ENCODE measurements at regions of chr5 and their contacts with region 1.

Region 1: GRCh38 chr5:115641948-115642347 is 16.1 kb upstream of the TMED7 start:
- DNase-seq: no peak
- ATAC-seq: no peak
- H3K4me3 ChIP-seq: no peak overlapping the region
- H3K27ac ChIP-seq: no peak overlapping the region
- H3K4me1 ChIP-seq: no peaks in the 10 kb centered on the region
- H3K27me3 ChIP-seq: no peaks in the 10 kb centered on the region
- CTCF ChIP-seq: no peak

Region 2: DNA sequence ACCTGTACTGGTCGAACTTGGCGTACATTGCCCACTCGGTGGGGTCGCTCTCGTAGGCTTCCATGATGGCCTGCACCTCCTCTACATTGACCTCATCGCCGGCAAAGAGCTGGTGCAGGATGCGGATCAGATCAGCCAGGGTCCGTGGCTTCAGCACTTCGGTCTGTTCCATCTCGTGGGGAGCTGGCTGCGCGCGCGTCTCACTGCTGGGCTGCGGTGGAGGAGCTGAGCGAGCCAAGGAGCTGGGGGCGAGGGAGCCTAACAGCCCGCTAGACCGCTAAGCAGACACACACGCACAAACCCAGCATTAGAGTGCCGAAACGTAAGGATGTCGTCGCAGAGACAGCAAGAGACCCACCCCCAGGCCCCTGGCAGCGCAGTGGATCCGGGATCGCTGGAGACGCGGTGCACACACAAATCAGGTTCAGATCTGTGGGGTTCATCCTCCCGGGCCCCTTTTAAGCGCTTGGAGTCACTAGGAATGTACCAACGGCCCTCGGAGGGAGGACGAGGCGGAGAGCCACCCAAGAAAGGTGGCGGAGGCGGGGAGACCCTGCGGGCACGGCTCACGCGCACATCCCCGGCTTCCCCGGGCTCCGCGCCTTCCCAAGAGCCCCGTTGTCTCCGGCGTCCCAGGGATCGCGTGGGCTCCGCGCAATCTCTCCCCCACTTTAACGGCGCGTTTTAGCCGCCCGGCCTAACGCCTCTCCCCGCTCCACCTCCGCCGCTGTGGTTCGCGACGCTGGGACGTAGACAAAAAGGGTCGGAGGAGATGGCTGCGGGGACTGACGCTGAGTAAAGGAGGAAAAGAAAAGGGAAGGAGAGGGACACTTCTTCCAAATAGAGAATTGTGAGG is 174.5 kb after region 1 on chr5 and contains the start of gene CDO1:
- intact Hi-C with region 1: loop called in 2 of 3 experiments (anchors 10 kb)
- DNase-seq: peak; percentile 18 to 70 (median 36)
- ATAC-seq: peak; percentile 76 to 85 (median 83)
- H3K4me3 ChIP-seq: peak within 1 kb of the TSS; percentile 29 to 53 (median 37)
- H3K27ac ChIP-seq: peak within 1 kb of the TSS; percentile 65 to 87 (median 72)
- H3K4me1 ChIP-seq: no peaks in the 10 kb centered on the region
- H3K27me3 ChIP-seq: no peaks in the 10 kb centered on the region
- CTCF ChIP-seq: no peak
- total RNA-seq, gene CDO1: 1.9 to 8.7 (median 3.8) TPM

Region 3: GRCh38 chr5:115825948-115826347 is 184.0 kb after region 1 on chr5:
- intact Hi-C with region 1: loop called in 1 of 3 experiments (anchors 10 kb)
- DNase-seq: no peak
- ATAC-seq: no peak
- H3K4me3 ChIP-seq: no peak overlapping the region
- H3K27ac ChIP-seq: no peak overlapping the region
- H3K4me1 ChIP-seq: no peaks in the 10 kb centered on the region
- H3K27me3 ChIP-seq: no peaks in the 10 kb centered on the region
- CTCF ChIP-seq: no peak

Region 4: DNA sequence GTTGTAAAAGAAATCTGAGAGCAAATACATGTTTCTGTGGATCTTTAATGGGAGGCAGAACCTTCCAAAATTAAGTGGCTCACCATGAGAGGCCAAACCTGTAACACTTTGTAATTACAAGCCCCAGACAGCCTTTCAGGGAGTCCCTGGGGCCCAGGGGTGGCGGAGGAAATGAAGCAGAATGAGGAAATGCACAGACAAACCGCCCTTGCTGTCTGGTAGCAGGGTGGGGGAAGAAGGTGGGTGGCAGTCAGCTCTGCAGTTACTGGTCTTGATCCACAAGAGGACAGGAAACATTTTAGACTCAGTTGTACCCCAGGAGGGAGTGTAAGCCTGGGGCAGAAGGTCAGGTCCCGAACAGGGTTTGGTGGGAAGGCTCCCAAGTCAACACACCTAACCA is 396.9 kb after region 1 on chr5:
- intact Hi-C with region 1: no loop called
- DNase-seq: no peak
- ATAC-seq: no peak
- H3K4me3 ChIP-seq: no peak overlapping the region
- H3K27ac ChIP-seq: no peak overlapping the region
- H3K4me1 ChIP-seq: no peaks in the 10 kb centered on the region
- H3K27me3 ChIP-seq: no peaks in the 10 kb centered on the region
- CTCF ChIP-seq: no peak